Activated CD8-positive, alpha-beta memory T cell treated with anti-CD3 and anti-CD28 coated beads, Interleukin-2, amount 10 ng/mL, durations not matched to agents 7 days and 5 days (primary cell): ENCODE measurements at regions of chr17 and their contacts with region 1.

Region 1: GRCh38 chr17:40355123-40355803 is 9.3 kb downstream of the GJD3 start:
- DNase-seq: peak; percentile 82
- ATAC-seq: peak; percentile 74
- H3K4me3 Mint-ChIP-seq: no peak overlapping the region
- H3K27ac Mint-ChIP-seq: no peak overlapping the region
- H3K4me1 Mint-ChIP-seq: peaks cover 14% of the 10 kb centered on the region
- H3K27me3 Mint-ChIP-seq: peaks cover 10% of the 10 kb centered on the region

Region 2: GRCh38 chr17:40203131-40203530 is 152.1 kb before region 1 on chr17:
- CTCF ChIA-PET with region 1: interaction called, 14 read pairs
- DNase-seq: no peak
- ATAC-seq: no peak
- H3K4me3 Mint-ChIP-seq: no peak overlapping the region
- H3K27ac Mint-ChIP-seq: no peak overlapping the region
- H3K4me1 Mint-ChIP-seq: peaks cover 7% of the 10 kb centered on the region
- H3K27me3 Mint-ChIP-seq: peaks cover 6% of the 10 kb centered on the region

Region 3: DNA sequence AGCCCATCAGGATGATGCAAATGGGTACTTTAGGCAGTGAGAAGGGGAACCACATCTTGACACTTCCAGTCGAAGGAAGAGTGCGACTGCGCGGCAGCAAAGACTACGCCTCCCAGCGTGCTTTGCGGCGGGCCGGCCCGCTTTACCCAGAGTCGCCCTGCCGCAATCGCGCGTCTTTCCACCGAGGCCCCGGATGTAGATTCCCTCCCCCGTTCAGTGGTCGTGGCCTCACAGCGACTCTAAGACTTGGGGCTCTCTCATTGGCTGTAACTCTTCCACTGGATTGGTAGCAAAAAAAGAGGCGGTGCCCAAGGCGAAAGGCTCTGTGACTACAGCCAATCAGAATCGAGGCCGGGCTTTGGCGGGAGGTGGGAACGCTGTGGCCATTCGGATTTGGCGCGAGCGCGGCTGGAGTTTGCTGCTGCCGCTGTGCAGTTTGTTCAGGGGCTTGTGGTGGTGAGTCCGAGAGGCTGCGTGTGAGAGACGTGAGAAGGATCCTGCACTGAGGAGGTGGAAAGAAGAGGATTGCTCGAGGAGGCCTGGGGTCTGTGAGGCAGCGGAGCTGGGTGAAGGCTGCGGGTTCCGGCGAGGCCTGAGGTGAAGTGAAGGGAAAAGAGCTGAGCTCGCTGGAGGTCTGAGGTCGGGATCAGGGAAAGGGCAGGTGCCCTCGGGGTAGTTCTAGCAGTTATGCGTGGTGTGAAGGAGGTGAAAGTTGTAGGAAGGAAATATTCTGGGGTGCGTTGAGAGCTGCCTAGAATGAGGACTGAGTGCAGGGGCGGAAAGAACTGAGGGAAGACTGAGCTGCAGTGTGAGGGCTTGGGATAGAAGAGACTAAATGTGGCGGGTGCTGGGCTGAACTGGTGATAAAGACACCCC is 67.5 kb before region 1 on chr17 and contains the start of gene CDC6:
- CTCF ChIA-PET with region 1: interaction called, 433 read pairs
- DNase-seq: peak; percentile 100
- ATAC-seq: peak; percentile 94
- H3K4me3 Mint-ChIP-seq: peak within 1 kb of the TSS; percentile 99
- H3K27ac Mint-ChIP-seq: peak within 1 kb of the TSS; percentile 98
- H3K4me1 Mint-ChIP-seq: peaks cover 56% of the 10 kb centered on the region
- H3K27me3 Mint-ChIP-seq: no peaks in the 10 kb centered on the region
- total RNA-seq, gene CDC6: 109 to 111 TPM

Region 4: GRCh38 chr17:40317880-40318829 is 37.1 kb before region 1 on chr17:
- CTCF ChIA-PET with region 1: interaction called, 433 read pairs
- DNase-seq: peak; percentile 95
- ATAC-seq: peak; percentile 77
- H3K4me3 Mint-ChIP-seq: peak overlapping the region; percentile 94
- H3K27ac Mint-ChIP-seq: peak overlapping the region; percentile 88
- H3K4me1 Mint-ChIP-seq: peaks cover 82% of the 10 kb centered on the region
- H3K27me3 Mint-ChIP-seq: no peaks in the 10 kb centered on the region

Region 5: GRCh38 chr17:40331743-40332641 is 23.3 kb before region 1 on chr17:
- CTCF ChIA-PET with region 1: interaction called, 18 read pairs
- DNase-seq: no peak
- ATAC-seq: no peak
- H3K4me3 Mint-ChIP-seq: no peak overlapping the region
- H3K27ac Mint-ChIP-seq: peak overlapping the region; percentile 68
- H3K4me1 Mint-ChIP-seq: peaks cover 75% of the 10 kb centered on the region
- H3K27me3 Mint-ChIP-seq: no peaks in the 10 kb centered on the region

Region 6: DNA sequence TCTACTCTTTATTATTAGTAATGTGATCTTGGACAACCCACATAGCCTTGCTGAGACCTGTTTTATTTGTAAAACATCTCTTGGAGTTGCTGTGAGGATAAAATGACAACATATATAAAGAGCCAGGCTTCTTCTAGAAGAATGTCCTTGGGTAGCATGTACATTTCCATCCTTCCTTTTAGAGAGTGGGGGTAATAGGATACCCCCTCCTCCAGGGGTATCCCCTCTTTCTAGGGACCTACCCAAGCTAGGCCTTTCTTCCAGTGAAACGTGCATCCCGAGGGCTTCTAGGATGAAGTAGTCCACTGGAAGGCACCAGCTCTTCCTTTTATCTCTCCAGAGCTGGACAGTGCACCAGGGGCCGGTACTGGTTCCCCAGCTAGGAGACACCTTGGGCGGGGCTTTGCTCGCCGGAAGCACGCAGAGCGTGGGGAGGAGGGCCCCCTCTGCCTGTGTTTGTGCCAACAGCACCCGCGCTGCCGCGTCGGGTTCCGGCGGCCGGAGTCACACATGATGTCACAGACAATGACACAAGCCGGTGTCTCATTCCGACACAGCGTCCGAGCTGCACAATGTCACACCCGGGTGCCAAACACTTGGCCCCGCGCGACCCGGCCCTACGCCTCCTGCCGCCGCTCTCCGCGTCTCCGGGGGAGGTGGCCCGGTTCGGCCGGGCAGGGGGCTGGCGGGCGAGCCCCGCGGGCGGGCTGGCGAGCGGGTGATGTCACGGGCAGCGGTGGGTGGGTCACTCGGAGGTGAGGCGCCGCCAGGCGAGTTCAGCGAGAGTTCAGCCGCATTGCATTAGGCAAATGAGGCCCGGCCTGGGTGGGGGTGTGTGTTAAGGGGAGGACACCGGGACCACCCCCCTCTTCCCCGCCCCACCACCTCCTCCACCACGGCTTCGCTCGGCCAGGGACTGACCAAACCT is 14.1 kb before region 1 on chr17:
- CTCF ChIA-PET with region 1: interaction called, 21 read pairs
- DNase-seq: peak; percentile 95
- ATAC-seq: peak; percentile 91
- H3K4me3 Mint-ChIP-seq: peak overlapping the region; percentile 68
- H3K27ac Mint-ChIP-seq: peak overlapping the region; percentile 87
- H3K4me1 Mint-ChIP-seq: peaks cover 75% of the 10 kb centered on the region
- H3K27me3 Mint-ChIP-seq: no peaks in the 10 kb centered on the region

Region 7: GRCh38 chr17:40417609-40418427 is 62.6 kb after region 1 on chr17 and contains the start of gene TOP2A:
- CTCF ChIA-PET with region 1: interaction called, 10 read pairs
- DNase-seq: peak; percentile 98
- ATAC-seq: peak; percentile 98
- H3K4me3 Mint-ChIP-seq: peak within 1 kb of the TSS; percentile 89
- H3K27ac Mint-ChIP-seq: peak within 1 kb of the TSS; percentile 95
- H3K4me1 Mint-ChIP-seq: peaks cover 28% of the 10 kb centered on the region
- H3K27me3 Mint-ChIP-seq: peaks cover 6% of the 10 kb centered on the region
- total RNA-seq, gene TOP2A: 310 to 347 TPM

Region 8: DNA sequence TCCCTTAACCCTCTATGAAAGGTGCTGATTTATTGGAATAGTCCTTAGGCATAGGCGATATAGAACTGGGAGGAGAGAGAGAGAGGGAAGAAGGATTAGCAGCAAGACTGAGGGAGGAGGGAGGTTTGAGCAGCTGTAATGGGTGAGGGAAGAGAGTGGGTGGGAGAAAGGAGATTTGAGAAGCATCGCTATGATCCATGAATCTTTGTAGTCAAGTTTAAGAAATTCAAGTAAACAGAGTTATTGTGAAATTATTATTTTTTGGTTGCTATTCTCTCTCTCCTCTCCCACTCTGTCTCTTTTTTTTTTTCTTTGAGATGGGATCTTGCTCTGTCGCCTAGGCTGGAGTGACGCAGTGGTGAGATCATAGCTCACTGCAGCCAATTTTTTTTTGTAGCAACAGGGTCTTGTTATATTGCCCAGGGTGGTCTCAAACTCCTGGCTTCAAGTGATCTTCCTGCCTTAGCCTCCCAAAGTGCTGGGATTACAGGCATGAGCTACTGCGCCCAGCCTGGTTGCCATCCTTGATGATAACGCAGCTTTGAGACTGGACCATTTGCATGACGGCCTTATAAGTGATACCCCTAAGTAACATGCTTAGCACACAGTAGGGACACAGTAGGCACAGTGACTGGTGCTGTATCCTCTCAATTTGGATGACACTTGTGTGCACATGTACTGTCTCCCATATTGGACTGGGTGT is 167.1 kb after region 1 on chr17:
- CTCF ChIA-PET with region 1: no interaction called
- DNase-seq: no peak
- ATAC-seq: no peak
- H3K4me3 Mint-ChIP-seq: no peak overlapping the region
- H3K27ac Mint-ChIP-seq: no peak overlapping the region
- H3K4me1 Mint-ChIP-seq: peaks cover 21% of the 10 kb centered on the region
- H3K27me3 Mint-ChIP-seq: peaks cover 31% of the 10 kb centered on the region